HAP-1 (cell line): ENCODE measurements at regions of chr11 and their contacts with region 1.

Region 1: DNA sequence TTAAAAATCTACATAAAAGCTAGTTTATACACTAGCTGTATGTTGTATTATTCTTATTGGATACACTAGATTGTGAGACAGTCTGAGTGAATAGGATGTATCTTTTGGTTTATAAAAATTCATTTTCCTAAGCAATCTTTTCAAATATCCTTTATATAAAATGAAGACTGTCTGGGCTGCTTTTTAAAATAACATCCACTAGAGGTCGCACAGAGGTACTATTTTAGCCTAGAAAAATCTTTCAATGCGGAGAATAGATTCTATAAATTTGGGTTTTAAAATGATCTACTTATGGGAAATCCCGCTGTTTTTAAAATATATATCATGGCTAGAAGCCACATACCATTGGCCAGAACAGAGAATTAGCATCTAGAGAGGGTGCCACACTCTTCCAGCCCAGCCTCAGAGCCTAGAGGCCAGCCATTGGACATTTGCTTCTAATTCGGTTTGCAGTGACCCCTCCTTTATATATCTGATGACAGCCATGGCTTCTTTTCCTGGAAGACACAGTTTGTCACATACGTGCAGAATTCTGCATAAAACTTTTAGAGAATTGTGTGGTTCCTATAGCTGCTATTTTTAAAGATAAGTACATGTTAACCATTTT is 7.3 kb downstream of the C11orf97 start:
- DNase-seq: peak; percentile 28 to 32
- H3K4me3 ChIP-seq: no peak overlapping the region
- H3K4me1 ChIP-seq: no peaks in the 10 kb centered on the region
- H3K27me3 ChIP-seq: peaks cover 18% of the 10 kb centered on the region

Region 2: GRCh38 chr11:94602430-94603372 is 83.1 kb after region 1 on chr11:
- in situ Hi-C with region 1: loop called (anchors 10 kb)
- DNase-seq: peak; percentile 61 to 80
- H3K4me3 ChIP-seq: no peak overlapping the region
- H3K4me1 ChIP-seq: 0 out of 2 replicates have a peak, but pooled peaks cover 3% of the 10 kb centered on the region
- H3K27me3 ChIP-seq: no peaks in the 10 kb centered on the region

Region 3: DNA sequence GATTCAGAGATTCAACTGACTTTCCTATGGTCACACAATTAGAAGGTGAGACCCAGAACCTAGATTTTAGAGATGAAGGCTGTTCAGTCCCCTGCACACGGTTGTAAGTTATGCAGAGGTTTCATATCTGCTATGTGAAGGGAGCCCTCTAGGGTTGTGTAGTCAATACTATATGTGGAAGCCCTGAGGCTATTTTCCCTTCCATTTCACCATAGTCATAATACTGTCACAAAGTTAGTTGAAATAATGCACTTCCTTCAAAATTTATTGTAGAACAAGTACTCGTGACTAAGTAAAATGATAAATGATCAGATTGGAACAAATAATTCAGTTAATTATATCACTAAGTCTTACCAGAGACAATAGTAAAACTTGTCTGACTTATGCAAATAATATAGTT is 618.9 kb after region 1 on chr11:
- in situ Hi-C with region 1: no loop called
- DNase-seq: no peak
- H3K4me3 ChIP-seq: no peak overlapping the region
- H3K4me1 ChIP-seq: no peaks in the 10 kb centered on the region
- H3K27me3 ChIP-seq: peaks cover 6% of the 10 kb centered on the region